Activated naive CD4-positive, alpha-beta T cell treated with anti-CD3 and anti-CD28 coated beads for 36 hours (primary cell): ENCODE measurements at regions of chr6 and their contacts with region 1.

Region 1: GRCh38 chr6:138109042-138109997 is 2.1 kb upstream of the PERP start:
- DNase-seq: peak; percentile 93
- H3K4me3 Mint-ChIP-seq: no peak overlapping the region
- H3K27ac Mint-ChIP-seq: no peak overlapping the region
- H3K4me1 Mint-ChIP-seq: peaks cover 19% of the 10 kb centered on the region
- H3K27me3 Mint-ChIP-seq: peaks cover 30% of the 10 kb centered on the region

Region 2: GRCh38 chr6:137271245-137272183 is 837.8 kb before region 1 on chr6:
- CTCF ChIA-PET with region 1: no interaction called
- intact Hi-C with region 1: loop called (anchors 2 kb)
- DNase-seq: no peak
- H3K4me3 Mint-ChIP-seq: no peak overlapping the region
- H3K27ac Mint-ChIP-seq: no peak overlapping the region
- H3K4me1 Mint-ChIP-seq: no peaks in the 10 kb centered on the region
- H3K27me3 Mint-ChIP-seq: peaks cover 9% of the 10 kb centered on the region

Region 3: GRCh38 chr6:137641474-137642077 is 467.7 kb before region 1 on chr6:
- CTCF ChIA-PET with region 1: no interaction called
- intact Hi-C with region 1: loop called (anchors 5 kb)
- DNase-seq: peak; percentile 84
- H3K4me3 Mint-ChIP-seq: no peak overlapping the region
- H3K27ac Mint-ChIP-seq: no peak overlapping the region
- H3K4me1 Mint-ChIP-seq: peaks cover 13% of the 10 kb centered on the region
- H3K27me3 Mint-ChIP-seq: no peaks in the 10 kb centered on the region

Region 4: GRCh38 chr6:137707590-137708360 is 401.5 kb before region 1 on chr6:
- CTCF ChIA-PET with region 1: interaction called, 7 read pairs
- intact Hi-C with region 1: loop called (anchors 1 kb)
- DNase-seq: peak; percentile 89
- H3K4me3 Mint-ChIP-seq: peak overlapping the region; percentile 58
- H3K27ac Mint-ChIP-seq: peak overlapping the region; percentile 86
- H3K4me1 Mint-ChIP-seq: peaks cover 58% of the 10 kb centered on the region
- H3K27me3 Mint-ChIP-seq: no peaks in the 10 kb centered on the region

Region 5: DNA sequence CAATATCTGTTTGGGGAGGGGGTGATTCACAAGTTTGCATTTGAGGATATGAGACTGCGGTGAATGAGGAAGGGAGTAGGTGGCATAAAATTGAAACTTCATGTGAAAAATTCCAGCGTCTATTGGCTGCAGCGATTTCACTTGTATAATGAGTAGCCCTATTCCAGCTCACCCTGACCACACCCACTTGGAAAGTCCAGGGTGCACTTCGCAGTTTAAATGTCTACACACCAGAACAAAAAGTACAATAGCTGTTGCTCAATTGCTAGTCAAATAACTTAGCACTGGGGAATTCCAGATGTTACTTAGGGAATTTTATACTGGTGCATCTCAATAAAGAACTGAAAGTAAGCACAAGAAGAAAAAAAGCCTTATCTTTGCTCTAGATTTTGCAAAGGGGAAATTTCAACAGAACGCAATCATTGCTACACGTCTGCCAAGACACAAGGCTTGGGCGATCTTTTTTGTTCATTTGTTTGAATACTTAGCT is 236.0 kb before region 1 on chr6:
- CTCF ChIA-PET with region 1: interaction called, 3 read pairs
- intact Hi-C with region 1: loop called (anchors 1 kb)
- DNase-seq: peak; percentile 97
- H3K4me3 Mint-ChIP-seq: peak overlapping the region; percentile 89
- H3K27ac Mint-ChIP-seq: peak overlapping the region; percentile 99
- H3K4me1 Mint-ChIP-seq: peaks cover 37% of the 10 kb centered on the region
- H3K27me3 Mint-ChIP-seq: no peaks in the 10 kb centered on the region

Region 6: GRCh38 chr6:138001750-138002349 is 107.5 kb before region 1 on chr6:
- CTCF ChIA-PET with region 1: interaction called, 35 read pairs
- intact Hi-C with region 1: loop called (anchors 1 kb)
- DNase-seq: peak; percentile 84
- H3K4me3 Mint-ChIP-seq: no peak overlapping the region
- H3K27ac Mint-ChIP-seq: no peak overlapping the region
- H3K4me1 Mint-ChIP-seq: peaks cover 16% of the 10 kb centered on the region
- H3K27me3 Mint-ChIP-seq: peaks cover 3% of the 10 kb centered on the region